ENCODE measurements at regions of chr5 and their contacts with region 1.

Region 1: GRCh38 chr5:149035372-149035790 is 27.5 kb downstream of the SH3TC2 start:
- DNase-seq: peak; percentile 89
- H3K4me3 Mint-ChIP-seq: no peak overlapping the region
- H3K27ac Mint-ChIP-seq: no peak overlapping the region
- H3K4me1 Mint-ChIP-seq: peaks cover 24% of the 10 kb centered on the region
- H3K27me3 Mint-ChIP-seq: no peaks in the 10 kb centered on the region

Region 2: DNA sequence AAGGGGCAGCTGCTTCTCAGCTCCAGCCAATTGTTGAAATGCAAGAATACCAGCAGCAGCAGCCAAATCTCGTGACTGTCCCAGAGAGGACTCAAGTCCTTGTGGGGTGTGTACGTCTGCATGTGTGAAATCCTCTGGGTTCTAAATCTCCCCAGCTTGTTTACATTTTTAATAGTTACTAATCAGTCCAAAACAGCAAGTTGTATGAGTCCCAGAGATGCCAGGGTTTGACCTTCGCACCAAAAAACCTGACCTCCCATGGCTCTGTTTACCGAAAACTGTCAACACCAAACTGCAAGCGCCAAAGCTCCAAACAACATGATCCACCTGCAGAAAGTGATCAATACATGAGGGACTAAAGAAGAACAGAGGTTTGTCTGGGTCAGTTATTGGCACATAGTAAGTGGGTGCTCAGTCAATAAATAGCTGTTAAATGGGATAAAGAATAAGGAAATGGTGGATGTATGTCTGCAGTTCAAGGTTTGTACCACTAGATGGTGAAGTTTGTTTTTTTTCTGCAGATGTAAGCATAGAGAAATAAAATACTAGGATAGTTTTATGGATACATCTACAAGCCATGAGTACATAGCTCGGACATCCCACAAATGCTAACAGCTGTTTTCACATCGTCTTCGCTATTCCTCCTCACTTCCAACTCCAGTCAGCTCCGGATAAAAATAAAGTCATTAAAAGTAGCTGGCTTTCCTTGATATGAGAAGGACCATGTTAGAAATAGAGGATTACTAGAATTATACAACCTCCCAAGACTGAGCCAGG is 294.2 kb before region 1 on chr5:
- CTCF ChIA-PET with region 1: interaction called, 105 read pairs
- intact Hi-C with region 1: no loop called
- DNase-seq: no peak
- H3K4me3 Mint-ChIP-seq: no peak overlapping the region
- H3K27ac Mint-ChIP-seq: no peak overlapping the region
- H3K4me1 Mint-ChIP-seq: no peaks in the 10 kb centered on the region
- H3K27me3 Mint-ChIP-seq: peaks cover 28% of the 10 kb centered on the region

Region 3: GRCh38 chr5:148939676-148940075 is 95.7 kb before region 1 on chr5:
- CTCF ChIA-PET with region 1: no interaction called
- intact Hi-C with region 1: no loop called
- DNase-seq: no peak
- H3K4me3 Mint-ChIP-seq: no peak overlapping the region
- H3K27ac Mint-ChIP-seq: no peak overlapping the region
- H3K4me1 Mint-ChIP-seq: no peaks in the 10 kb centered on the region
- H3K27me3 Mint-ChIP-seq: peaks cover 4% of the 10 kb centered on the region

Region 4: GRCh38 chr5:148957591-148958202 is 77.7 kb before region 1 on chr5:
- CTCF ChIA-PET with region 1: interaction called, 21 read pairs
- intact Hi-C with region 1: loop called (anchors 1 kb)
- DNase-seq: peak; percentile 66
- H3K4me3 Mint-ChIP-seq: no peak overlapping the region
- H3K27ac Mint-ChIP-seq: no peak overlapping the region
- H3K4me1 Mint-ChIP-seq: no peaks in the 10 kb centered on the region
- H3K27me3 Mint-ChIP-seq: no peaks in the 10 kb centered on the region

Region 5: GRCh38 chr5:149024477-149024876 is 10.9 kb before region 1 on chr5:
- CTCF ChIA-PET with region 1: interaction called, 10 read pairs
- intact Hi-C with region 1: loop called (anchors 1 kb)
- DNase-seq: no peak
- H3K4me3 Mint-ChIP-seq: no peak overlapping the region
- H3K27ac Mint-ChIP-seq: no peak overlapping the region
- H3K4me1 Mint-ChIP-seq: peaks cover 2% of the 10 kb centered on the region
- H3K27me3 Mint-ChIP-seq: peaks cover 8% of the 10 kb centered on the region

Region 6: DNA sequence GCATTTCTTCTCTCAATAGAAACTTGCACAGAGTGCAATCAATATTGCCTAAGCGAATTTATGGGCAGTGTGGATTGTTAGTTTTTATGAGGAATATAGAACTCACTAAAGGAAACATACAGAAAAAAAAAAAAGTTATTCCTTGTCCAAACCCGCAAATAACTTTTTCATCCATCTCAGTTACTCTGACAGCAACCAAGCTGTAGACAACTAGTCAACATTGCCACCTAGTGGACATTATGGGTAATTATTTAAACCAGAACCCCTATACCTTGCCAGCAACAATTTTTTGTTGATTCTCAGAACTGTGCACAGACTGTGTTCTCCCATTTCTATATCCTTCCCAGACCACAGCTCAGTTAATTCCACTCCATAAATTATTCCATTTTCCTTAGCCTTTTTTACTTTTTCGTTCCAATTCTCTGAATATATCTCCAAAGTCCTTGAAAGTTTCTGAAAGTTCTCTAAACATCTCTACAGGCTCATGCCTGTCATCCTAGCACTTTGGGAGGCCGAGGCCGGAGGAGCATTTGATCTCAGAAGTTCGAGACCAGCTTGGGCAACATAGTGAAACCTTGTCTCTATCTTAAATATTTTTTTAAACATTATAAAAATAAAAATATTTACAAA is 233.7 kb after region 1 on chr5:
- CTCF ChIA-PET with region 1: interaction called, 3 read pairs
- intact Hi-C with region 1: loop called (anchors 2 kb)
- DNase-seq: no peak
- H3K4me3 Mint-ChIP-seq: no peak overlapping the region
- H3K27ac Mint-ChIP-seq: no peak overlapping the region
- H3K4me1 Mint-ChIP-seq: peaks cover 16% of the 10 kb centered on the region
- H3K27me3 Mint-ChIP-seq: peaks cover 20% of the 10 kb centered on the region